Vagina (tissue), 2 donors: ENCODE measurements at regions of chr11 and their contacts with region 1.

Region 1: GRCh38 chr11:74069147-74070047 is 60.5 kb upstream of the UCP3 start:
- DNase-seq: no peak
- H3K4me3 ChIP-seq: no peak overlapping the region
- H3K27ac ChIP-seq: no peak overlapping the region
- H3K4me1 ChIP-seq: no peaks in the 10 kb centered on the region
- H3K27me3 ChIP-seq: no peaks in the 10 kb centered on the region
- CTCF ChIP-seq: no peak
- POLR2A ChIP-seq: no peak

Region 2: GRCh38 chr11:72189461-72190275 is 1879.7 kb before region 1 on chr11:
- intact Hi-C with region 1: loop called (anchors 5 kb)
- DNase-seq: no peak
- H3K4me3 ChIP-seq: no peak overlapping the region
- H3K27ac ChIP-seq: no peak overlapping the region
- H3K4me1 ChIP-seq: no peaks in the 10 kb centered on the region
- H3K27me3 ChIP-seq: no peaks in the 10 kb centered on the region
- CTCF ChIP-seq: no peak
- POLR2A ChIP-seq: no peak

Region 3: GRCh38 chr11:73114110-73114824 is 955.1 kb before region 1 on chr11:
- intact Hi-C with region 1: no loop called
- DNase-seq: no peak
- H3K4me3 ChIP-seq: no peak overlapping the region
- H3K27ac ChIP-seq: no peak overlapping the region
- H3K4me1 ChIP-seq: no peaks in the 10 kb centered on the region
- H3K27me3 ChIP-seq: no peaks in the 10 kb centered on the region
- CTCF ChIP-seq: no peak
- POLR2A ChIP-seq: no peak

Region 4: GRCh38 chr11:74412321-74412720 is 342.9 kb after region 1 on chr11:
- intact Hi-C with region 1: no loop called
- DNase-seq: no peak
- H3K4me3 ChIP-seq: no peak overlapping the region
- H3K27ac ChIP-seq: no peak overlapping the region
- H3K4me1 ChIP-seq: peaks cover 14% of the 10 kb centered on the region
- H3K27me3 ChIP-seq: no peaks in the 10 kb centered on the region
- CTCF ChIP-seq: no peak
- POLR2A ChIP-seq: no peak